ENCODE measurements at regions of chr12 and their contacts with region 1.

Region 1: DNA sequence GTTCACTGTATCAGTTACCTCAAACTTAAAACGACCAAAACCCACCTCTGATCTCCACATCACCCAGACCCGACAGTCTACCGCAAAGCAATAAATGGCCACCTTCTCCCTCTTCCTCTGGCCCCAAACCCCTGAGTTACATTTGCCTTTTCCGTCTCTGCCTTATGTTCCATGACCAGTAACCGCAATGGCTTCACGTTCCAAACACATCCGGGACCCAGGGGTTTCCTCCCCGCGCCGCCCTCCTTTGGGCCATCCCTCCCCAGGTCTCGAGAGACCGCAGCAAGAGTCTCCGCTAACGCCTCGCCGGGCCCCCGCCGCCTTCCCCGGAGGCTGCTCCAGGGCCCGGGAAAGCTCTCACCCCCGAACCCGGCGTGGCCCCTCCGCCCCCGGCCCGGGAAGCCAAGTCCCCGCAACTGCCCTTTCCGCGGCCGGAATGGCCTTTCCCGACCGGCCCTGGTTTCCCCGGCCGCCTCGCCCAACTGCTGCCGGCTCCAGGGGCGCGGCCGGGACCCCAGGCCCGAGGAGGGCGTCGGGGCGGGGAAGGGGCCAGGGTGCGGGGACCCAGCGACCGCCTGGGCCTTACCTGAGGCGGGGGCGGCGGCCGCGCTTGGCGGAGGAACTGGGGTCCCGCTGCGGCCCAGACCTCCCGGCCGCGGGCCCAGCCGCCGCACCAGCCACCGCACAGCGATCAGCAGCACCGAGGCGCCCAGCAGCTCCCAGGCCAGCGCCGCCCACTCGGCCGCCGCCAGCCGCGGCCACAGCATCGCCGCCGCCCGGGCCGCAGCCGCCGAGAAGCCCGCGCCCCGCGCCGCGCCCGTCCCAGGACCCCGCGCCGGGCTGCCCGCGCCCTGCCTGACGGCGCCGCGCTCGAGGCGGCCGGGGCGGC is at the start of gene ANKLE2:
- DNase-seq: peak; percentile 84
- H3K4me3 Mint-ChIP-seq: peak within 1 kb of the TSS; percentile 98
- H3K27ac Mint-ChIP-seq: peak within 1 kb of the TSS; percentile 99
- H3K4me1 Mint-ChIP-seq: peaks cover 38% of the 10 kb centered on the region
- H3K27me3 Mint-ChIP-seq: no peaks in the 10 kb centered on the region
- total RNA-seq, gene ANKLE2: 102 to 106 TPM

Region 2: GRCh38 chr12:130871286-130872178 is 1889.7 kb before region 1 on chr12 and contains the start of gene RAN:
- CTCF ChIA-PET with region 1: no interaction called
- intact Hi-C with region 1: loop called (anchors 5 kb)
- DNase-seq: peak; percentile 91
- H3K4me3 Mint-ChIP-seq: peak within 1 kb of the TSS; percentile 98
- H3K27ac Mint-ChIP-seq: peak within 1 kb of the TSS; percentile 99
- H3K4me1 Mint-ChIP-seq: peaks cover 61% of the 10 kb centered on the region
- H3K27me3 Mint-ChIP-seq: no peaks in the 10 kb centered on the region
- total RNA-seq, gene RAN: 2,370 to 2,418 TPM

Region 3: GRCh38 chr12:132687208-132688164 is 73.8 kb before region 1 on chr12 and contains the starts of genes POLE and PXMP2:
- CTCF ChIA-PET with region 1: no interaction called
- intact Hi-C with region 1: loop called (anchors 1 kb)
- DNase-seq: peak; percentile 96
- H3K4me3 Mint-ChIP-seq: peak within 1 kb of the TSS; percentile 79
- H3K27ac Mint-ChIP-seq: peak within 1 kb of the TSS; percentile 66
- H3K4me1 Mint-ChIP-seq: peaks cover 23% of the 10 kb centered on the region
- H3K27me3 Mint-ChIP-seq: no peaks in the 10 kb centered on the region
- total RNA-seq, gene POLE: 118 to 121 TPM
- total RNA-seq, gene PXMP2: 11.3 to 12.8 TPM

Region 4: GRCh38 chr12:132739600-132740312 is 21.5 kb before region 1 on chr12:
- CTCF ChIA-PET with region 1: no interaction called
- intact Hi-C with region 1: no loop called
- DNase-seq: no peak
- H3K4me3 Mint-ChIP-seq: no peak overlapping the region
- H3K27ac Mint-ChIP-seq: no peak overlapping the region
- H3K4me1 Mint-ChIP-seq: peaks cover 6% of the 10 kb centered on the region
- H3K27me3 Mint-ChIP-seq: no peaks in the 10 kb centered on the region

Region 5: GRCh38 chr12:132771126-132771838 is 10.0 kb after region 1 on chr12:
- CTCF ChIA-PET with region 1: interaction called, 4 read pairs
- intact Hi-C with region 1: loop called (anchors 1 kb)
- DNase-seq: peak; percentile 75
- H3K4me3 Mint-ChIP-seq: peak overlapping the region; percentile 30
- H3K27ac Mint-ChIP-seq: peak overlapping the region; percentile 80
- H3K4me1 Mint-ChIP-seq: peaks cover 57% of the 10 kb centered on the region
- H3K27me3 Mint-ChIP-seq: no peaks in the 10 kb centered on the region

Region 6: GRCh38 chr12:132887513-132888351 is 126.5 kb after region 1 on chr12 and contains the start of gene CHFR:
- CTCF ChIA-PET with region 1: no interaction called
- intact Hi-C with region 1: loop called (anchors 2 kb)
- DNase-seq: peak; percentile 97
- H3K4me3 Mint-ChIP-seq: peak within 1 kb of the TSS; percentile 98
- H3K27ac Mint-ChIP-seq: peak within 1 kb of the TSS; percentile 99
- H3K4me1 Mint-ChIP-seq: peaks cover 32% of the 10 kb centered on the region
- H3K27me3 Mint-ChIP-seq: no peaks in the 10 kb centered on the region
- total RNA-seq, gene CHFR: 27.2 to 32.8 TPM

Region 7: DNA sequence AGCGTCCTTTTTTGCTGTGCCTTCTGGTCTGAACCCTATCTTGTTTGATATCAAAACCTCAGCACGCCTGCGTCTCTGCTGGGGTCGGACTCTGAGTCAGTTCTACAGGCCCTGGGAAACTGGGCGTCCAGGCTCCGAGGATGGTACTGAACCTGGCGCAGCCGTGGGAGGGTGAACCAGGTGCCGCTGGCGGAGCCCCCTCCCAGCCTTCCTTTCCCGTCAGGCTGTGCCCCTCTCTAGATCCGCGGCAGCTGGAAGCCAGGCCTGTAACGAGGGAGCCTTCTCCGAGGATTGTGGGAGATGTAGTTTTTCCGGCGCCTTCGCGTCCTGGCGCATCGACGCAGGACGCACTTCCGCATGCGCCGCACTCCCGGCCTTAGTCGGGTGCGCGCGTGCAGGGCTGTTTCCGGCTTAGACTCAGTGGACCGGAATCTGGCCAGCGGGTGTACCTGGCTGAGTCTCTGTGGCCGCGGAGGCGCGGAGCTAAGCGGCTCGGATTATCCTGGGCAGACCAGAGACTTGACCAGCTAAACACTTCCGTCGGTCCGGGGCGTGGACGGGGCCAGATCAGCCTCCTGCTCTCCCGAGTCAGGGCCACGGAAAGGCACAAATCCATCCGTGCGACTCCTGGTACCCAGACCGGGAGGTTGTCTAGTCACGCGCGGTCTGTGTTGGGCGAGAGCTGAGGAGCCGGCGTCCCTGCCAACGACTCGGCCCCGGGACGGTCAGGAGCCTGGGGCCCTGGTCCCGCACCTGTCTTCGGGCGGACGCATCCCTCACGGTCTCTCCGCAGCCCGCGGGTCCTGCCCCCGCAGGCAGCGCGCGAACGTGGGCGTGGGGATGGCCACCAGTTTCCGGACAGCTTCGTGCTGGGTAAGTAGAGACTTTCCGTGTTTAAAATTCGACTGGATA is 225.0 kb after region 1 on chr12 and contains the start of gene ZNF26:
- CTCF ChIA-PET with region 1: no interaction called
- intact Hi-C with region 1: loop called (anchors 1 kb)
- DNase-seq: peak; percentile 92
- H3K4me3 Mint-ChIP-seq: peak within 1 kb of the TSS; percentile 91
- H3K27ac Mint-ChIP-seq: peak within 1 kb of the TSS; percentile 90
- H3K4me1 Mint-ChIP-seq: peaks cover 24% of the 10 kb centered on the region
- H3K27me3 Mint-ChIP-seq: peaks cover 4% of the 10 kb centered on the region
- total RNA-seq, gene ZNF26: 8.4 to 12.2 TPM

Region 8: GRCh38 chr12:133181238-133181959 is 420.1 kb after region 1 on chr12 and contains the start of gene ZNF268:
- CTCF ChIA-PET with region 1: no interaction called
- intact Hi-C with region 1: loop called (anchors 1 kb)
- DNase-seq: peak; percentile 96
- H3K4me3 Mint-ChIP-seq: peak within 1 kb of the TSS; percentile 94
- H3K27ac Mint-ChIP-seq: peak within 1 kb of the TSS; percentile 79
- H3K4me1 Mint-ChIP-seq: peaks cover 19% of the 10 kb centered on the region
- H3K27me3 Mint-ChIP-seq: no peaks in the 10 kb centered on the region
- total RNA-seq, gene ZNF268: 8.4 to 9.1 TPM

Measured in activated naive CD4-positive, alpha-beta T cell treated with anti-CD3 and anti-CD28 coated beads for 36 hours (primary cell).